Heart left ventricle (tissue), 16 donors: ENCODE measurements at regions of chr1 and their contacts with region 1.

Region 1: GRCh38 chr1:39973503-39974135 is 18.7 kb downstream of the MFSD2A start:
- DNase-seq: peak; percentile 55 to 85 (median 75)
- ATAC-seq: peak; percentile 63 to 86 (median 84)
- H3K4me3 ChIP-seq: no peak overlapping the region
- H3K27ac ChIP-seq: no peak overlapping the region
- H3K4me1 ChIP-seq: peaks cover 0 to 5% (median 0%) of the 10 kb centered on the region in 12 donors
- H3K27me3 ChIP-seq: no peaks in the 10 kb centered on the region
- CTCF ChIP-seq: peak; percentile 93 to 99 (median 96)
- POLR2A ChIP-seq: no peak

Region 2: GRCh38 chr1:39919545-39919944 is 54.1 kb before region 1 on chr1:
- intact Hi-C with region 1: loop called in 9 of 10 experiments (anchors 1 to 5 kb)
- DNase-seq: peak in 1 of 5 donors; percentile 24
- ATAC-seq: peak; percentile 58 to 86 (median 82)
- H3K4me3 ChIP-seq: no peak overlapping the region
- H3K27ac ChIP-seq: no peak overlapping the region
- H3K4me1 ChIP-seq: peaks cover 0 to 3% (median 0%) of the 10 kb centered on the region in 12 donors
- H3K27me3 ChIP-seq: peaks cover 0 to 21% (median 5%) of the 10 kb centered on the region in 9 donors
- CTCF ChIP-seq: peak in 11 of 12 donors; percentile 29 to 53 (median 43)
- POLR2A ChIP-seq: no peak